ENCODE measurements at regions of chr1 and their contacts with region 1.

Region 1: DNA sequence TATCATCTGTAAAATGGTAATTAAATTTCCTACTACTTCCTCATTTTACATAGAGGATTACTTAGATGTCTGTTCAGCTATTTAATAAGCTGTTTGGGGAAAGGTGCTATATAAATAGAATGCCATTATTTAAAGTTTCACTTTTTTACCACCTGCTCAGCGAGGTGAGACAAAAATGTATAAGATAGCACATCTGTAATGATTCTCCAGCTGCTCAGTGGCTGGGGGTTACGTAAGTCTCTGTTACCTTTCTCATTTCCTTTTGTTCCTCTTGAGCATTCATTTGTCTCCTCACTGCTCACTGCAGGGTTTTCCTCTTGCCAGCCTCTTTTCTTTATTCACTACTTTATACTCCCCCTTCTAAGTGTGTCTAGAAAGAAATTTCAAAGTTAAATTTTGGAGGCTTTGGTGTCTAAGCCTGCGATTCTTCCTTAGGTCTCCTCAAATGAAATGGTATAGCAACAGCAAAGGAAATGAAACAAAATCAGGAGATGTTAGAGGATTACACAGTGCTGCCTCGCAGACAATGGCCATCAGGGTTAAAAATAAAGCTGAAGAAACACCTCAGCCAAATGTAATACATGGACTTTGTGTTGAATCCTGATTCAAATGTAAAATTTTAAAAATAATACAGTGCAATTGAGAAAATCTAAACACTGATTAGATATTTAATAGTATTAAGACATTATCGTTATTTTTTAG is 6.8 kb downstream of the RGS8 start:
- DNase-seq: no peak
- ATAC-seq: no peak
- H3K4me3 ChIP-seq: no peak overlapping the region
- H3K27ac ChIP-seq: no peak overlapping the region
- H3K4me1 ChIP-seq: peaks cover 14% of the 10 kb centered on the region
- H3K27me3 ChIP-seq: no peaks in the 10 kb centered on the region

Region 2: GRCh38 chr1:182329471-182329870 is 348.1 kb before region 1 on chr1:
- intact Hi-C with region 1: loop called in 1 of 4 experiments (anchors 10 kb)
- DNase-seq: no peak
- ATAC-seq: no peak
- H3K4me3 ChIP-seq: no peak overlapping the region
- H3K27ac ChIP-seq: no peak overlapping the region
- H3K4me1 ChIP-seq: no peaks in the 10 kb centered on the region
- H3K27me3 ChIP-seq: no peaks in the 10 kb centered on the region